Testis (tissue), 5 donors: ENCODE measurements at regions of chr2 and their contacts with region 1.

Region 1: DNA sequence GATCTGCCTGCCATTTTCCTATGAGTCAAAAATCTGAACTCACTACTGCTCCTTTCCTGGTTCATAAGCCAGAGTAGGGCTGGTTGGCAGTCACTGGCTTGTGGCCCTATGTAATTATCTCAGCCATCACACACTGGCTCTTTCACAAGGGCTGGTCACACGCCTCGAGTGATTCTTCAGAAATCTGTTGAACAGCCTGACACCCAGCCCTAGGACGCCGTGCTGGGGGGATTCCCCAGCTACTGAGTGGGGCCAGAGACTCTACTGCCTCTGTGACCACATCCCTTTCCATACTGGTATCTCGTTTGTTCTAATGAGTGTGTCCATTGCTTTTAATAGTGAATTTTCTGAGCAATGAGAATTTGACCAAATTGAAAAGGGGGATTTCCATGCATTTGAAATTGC is 45.8 kb upstream of the RBM44 start:
- DNase-seq: no peak
- H3K4me3 ChIP-seq: no peak overlapping the region
- H3K27ac ChIP-seq: no peak overlapping the region
- H3K4me1 ChIP-seq: no peaks in the 10 kb centered on the region
- H3K27me3 ChIP-seq: no peaks in the 10 kb centered on the region
- CTCF ChIP-seq: no peak
- POLR2A ChIP-seq: no peak

Region 2: DNA sequence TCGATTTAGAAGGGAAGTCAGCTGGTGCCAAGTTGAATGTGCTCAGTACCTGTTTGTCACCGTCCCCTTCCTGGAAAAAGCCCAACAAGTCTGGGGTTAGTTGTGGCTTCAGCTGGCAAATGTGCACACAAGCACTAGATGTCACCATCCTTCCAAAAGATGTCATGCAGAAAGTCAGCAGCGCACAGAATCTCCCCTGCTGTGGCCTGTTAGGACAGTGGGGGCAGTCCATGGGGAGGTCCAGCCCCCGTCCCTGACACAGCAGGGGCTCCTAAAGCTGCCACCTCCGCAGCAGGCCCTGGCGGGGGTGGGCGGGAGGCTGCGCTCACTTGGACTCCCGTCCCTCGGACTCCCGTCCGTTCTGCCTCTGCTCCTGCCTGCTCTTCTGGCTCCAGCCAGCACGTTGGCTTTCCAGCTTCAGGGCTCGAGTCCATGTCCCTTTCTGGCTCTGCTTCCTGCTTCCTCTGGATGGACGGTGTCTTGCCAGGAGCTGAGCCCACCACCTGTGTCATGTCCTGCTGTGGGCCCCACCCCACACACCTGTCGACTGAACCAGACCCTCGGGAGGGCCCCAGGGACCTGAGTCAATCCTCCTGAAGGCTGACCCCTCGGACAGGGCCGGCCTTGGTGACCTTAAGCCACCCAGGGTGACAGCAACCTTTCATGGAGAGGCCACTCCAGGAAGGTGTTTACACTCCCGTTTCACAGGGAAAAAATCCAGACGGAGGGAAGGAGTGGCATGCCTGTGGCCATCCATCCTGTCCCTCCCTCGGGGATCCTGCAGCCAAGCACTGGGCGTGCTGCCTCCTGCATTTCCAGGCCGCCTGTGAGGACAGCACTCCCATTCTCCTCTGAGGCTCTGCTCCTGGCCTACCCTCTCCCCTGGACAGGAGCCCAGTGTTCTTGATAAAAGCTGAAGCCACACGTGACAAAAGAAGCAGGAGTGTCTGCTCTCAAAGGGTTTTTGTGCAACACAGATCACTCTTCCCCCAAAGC is 170.7 kb before region 1 on chr2:
- intact Hi-C with region 1: loop called (anchors 5 kb)
- DNase-seq: peak; percentile 97
- H3K4me3 ChIP-seq: no peak overlapping the region
- H3K27ac ChIP-seq: peak overlapping the region; percentile 53 to 78
- H3K4me1 ChIP-seq: peaks cover 10% of the 10 kb centered on the region
- H3K27me3 ChIP-seq: no peaks in the 10 kb centered on the region
- CTCF ChIP-seq: peak in 2 of 3 experiments; percentile 31 to 42
- POLR2A ChIP-seq: no peak